ENCODE measurements at regions of chr15 and their contacts with region 1.

Region 1: GRCh38 chr15:49620658-49621368 is at the starts of genes DTWD1 and FAM227B:
- DNase-seq: peak; percentile 98
- total RNA-seq, gene DTWD1: 14.3 TPM
- total RNA-seq, gene FAM227B: 11.5 TPM

Region 2: DNA sequence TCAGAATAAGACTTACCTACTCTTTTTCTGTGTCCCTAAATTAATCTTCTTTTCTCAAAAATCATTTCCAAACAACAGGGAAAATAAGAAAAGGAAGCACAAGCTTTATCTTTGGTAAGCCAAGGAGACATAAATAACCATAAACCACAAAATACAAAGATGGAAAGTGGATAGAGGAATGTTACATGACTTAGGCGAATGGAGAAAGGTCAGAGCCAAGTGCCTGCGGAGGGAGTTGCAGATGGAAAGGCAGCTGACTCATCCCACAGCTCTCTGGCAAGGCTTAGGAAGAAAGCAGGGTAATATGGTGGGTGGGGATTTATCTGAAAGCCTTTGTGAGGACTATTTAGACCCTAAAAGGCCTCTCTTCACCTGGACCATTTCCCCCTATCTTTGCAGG is 378.0 kb before region 1 on chr15:
- intact Hi-C with region 1: loop called (anchors 5 kb)
- DNase-seq: no peak

Region 3: GRCh38 chr15:49558924-49559323 is 61.9 kb before region 1 on chr15:
- intact Hi-C with region 1: no loop called
- DNase-seq: no peak

Region 4: GRCh38 chr15:49748791-49749190 is 128.0 kb after region 1 on chr15:
- intact Hi-C with region 1: no loop called
- DNase-seq: no peak

Measured in cardiac septum (tissue), 1 donor.